Activated CD8-positive, alpha-beta memory T cell treated with anti-CD3 and anti-CD28 coated beads, Interleukin-2, amount 10 ng/mL, durations not matched to agents 7 days and 5 days (primary cell): ENCODE measurements at regions of chr1 and their contacts with region 1.

Region 1: DNA sequence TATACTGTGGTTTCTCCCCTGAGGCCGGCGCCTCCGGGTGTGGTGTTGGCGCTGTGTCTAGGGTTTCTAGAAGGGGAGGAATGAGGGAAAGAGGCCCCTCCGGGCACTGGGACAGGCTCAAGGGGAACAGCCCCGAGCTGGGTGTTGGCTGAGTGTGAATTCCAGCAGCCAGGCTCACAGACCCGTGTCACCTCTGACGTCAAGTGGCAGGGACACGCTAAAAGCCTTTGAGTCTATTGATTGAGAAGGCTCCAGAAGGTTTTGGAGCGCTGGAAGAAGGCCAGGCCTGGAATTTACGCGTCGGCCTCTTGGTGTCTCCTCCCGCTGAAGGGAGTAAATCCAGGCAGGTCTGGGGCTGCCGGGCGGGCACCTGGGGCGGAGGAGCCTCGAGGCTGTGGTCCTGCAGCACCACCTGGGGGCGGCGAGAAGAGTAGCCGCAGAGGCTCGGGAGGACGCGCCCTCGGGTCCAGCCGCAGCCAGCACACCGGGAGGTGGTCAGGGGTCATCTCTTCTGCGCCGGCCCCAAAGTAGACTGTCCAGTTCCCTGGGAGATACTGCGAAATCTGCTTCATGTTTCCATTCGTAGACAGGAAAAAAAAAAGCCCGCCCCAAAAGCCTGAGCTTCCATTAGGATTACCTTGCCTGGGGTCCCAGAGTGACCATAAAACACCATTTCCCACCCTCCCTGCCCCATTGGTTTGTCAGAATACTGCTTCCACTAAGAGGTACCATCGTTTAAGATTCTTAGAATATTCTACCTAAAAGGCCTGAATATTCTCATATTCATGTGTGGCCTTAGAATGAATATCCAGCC is 61.7 kb downstream of the TLR5 start:
- DNase-seq: peak; percentile 81
- ATAC-seq: peak; percentile 95
- H3K4me3 Mint-ChIP-seq: peak overlapping the region; percentile 12
- H3K27ac Mint-ChIP-seq: no peak overlapping the region
- H3K4me1 Mint-ChIP-seq: no peaks in the 10 kb centered on the region
- H3K27me3 Mint-ChIP-seq: no peaks in the 10 kb centered on the region

Region 2: DNA sequence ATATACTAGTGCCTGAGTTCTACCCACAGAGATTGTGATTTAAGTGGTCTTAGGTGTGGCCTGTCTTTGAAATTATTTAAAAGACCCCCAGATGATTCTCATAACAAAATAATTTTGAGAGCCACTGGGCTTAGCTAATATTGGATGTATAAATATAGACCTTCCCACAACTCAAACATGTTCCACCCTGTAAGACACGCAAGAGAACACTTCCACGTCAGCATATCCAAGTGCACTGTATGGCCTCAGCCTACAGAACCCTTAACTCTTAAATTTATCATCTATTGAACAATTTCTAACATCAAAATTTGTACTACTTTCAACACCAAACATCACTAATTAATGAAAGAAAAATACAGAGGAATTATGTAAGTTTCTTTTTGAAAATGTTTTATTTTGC is 341.9 kb before region 1 on chr1:
- CTCF ChIA-PET with region 1: interaction called, 10 read pairs
- DNase-seq: no peak
- ATAC-seq: no peak
- H3K4me3 Mint-ChIP-seq: no peak overlapping the region
- H3K27ac Mint-ChIP-seq: no peak overlapping the region
- H3K4me1 Mint-ChIP-seq: peaks cover 2% of the 10 kb centered on the region
- H3K27me3 Mint-ChIP-seq: no peaks in the 10 kb centered on the region

Region 3: DNA sequence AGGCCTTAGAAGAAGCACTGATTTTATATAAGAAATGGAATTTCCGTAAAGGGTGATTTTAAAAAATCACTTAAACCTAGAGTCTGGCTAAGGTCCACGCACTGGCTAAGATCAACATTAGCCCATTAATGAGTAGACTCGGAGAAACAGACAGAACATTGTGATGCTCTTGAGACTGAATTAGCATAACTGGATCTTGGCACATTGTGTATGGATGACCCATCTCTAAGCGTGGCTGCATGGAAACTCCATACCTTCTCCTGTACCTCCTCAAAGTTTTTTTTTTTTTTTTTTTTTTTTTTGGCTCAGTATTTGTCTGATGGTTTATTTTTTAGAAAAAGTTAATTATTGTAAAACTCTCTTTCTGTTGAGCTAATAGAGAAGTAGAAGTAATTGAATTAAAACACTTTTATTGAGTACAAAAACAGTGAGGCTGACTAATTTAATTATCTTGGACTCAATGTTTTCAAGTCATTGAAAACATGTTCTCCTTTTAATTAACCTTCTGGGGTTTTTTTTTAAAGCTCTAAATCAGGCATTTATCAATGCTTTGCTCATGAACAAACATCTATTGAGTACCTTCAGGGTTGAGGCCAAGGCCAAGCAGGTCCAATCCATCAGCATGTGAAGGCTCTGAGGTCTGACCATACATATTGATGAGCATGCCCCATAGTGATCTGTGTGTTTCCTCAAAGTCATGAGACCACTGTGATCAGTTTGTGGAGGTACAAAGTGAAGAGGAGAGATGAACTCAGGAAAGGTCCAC is 12.3 kb before region 1 on chr1:
- CTCF ChIA-PET with region 1: no interaction called
- DNase-seq: no peak
- ATAC-seq: no peak
- H3K4me3 Mint-ChIP-seq: no peak overlapping the region
- H3K27ac Mint-ChIP-seq: no peak overlapping the region
- H3K4me1 Mint-ChIP-seq: no peaks in the 10 kb centered on the region
- H3K27me3 Mint-ChIP-seq: peaks cover 8% of the 10 kb centered on the region